Activated B cell treated with CpG ODN at 0.5 μM for 24 hours (primary cell): ENCODE measurements at regions of chr4 and their contacts with region 1.

Region 1: GRCh38 chr4:101596781-101597552 is 193.6 kb upstream of the BANK1 start:
- DNase-seq: no peak
- ATAC-seq: peak; percentile 62
- H3K4me3 Mint-ChIP-seq: peak overlapping the region; percentile 7
- H3K27ac Mint-ChIP-seq: peak overlapping the region; percentile 74
- H3K4me1 Mint-ChIP-seq: peaks cover 15% of the 10 kb centered on the region
- H3K27me3 Mint-ChIP-seq: no peaks in the 10 kb centered on the region
- CTCF ChIP-seq: no peak

Region 2: GRCh38 chr4:101037938-101038413 is 559.0 kb before region 1 on chr4:
- CTCF ChIA-PET with region 1: no interaction called
- POLR2A ChIA-PET with region 1: interaction called, 11 read pairs
- intact Hi-C with region 1: no loop called
- DNase-seq: no peak
- ATAC-seq: no peak
- H3K4me3 Mint-ChIP-seq: no peak overlapping the region
- H3K27ac Mint-ChIP-seq: no peak overlapping the region
- H3K4me1 Mint-ChIP-seq: no peaks in the 10 kb centered on the region
- H3K27me3 Mint-ChIP-seq: no peaks in the 10 kb centered on the region
- CTCF ChIP-seq: no peak

Region 3: GRCh38 chr4:101425829-101426228 is 171.1 kb before region 1 on chr4:
- CTCF ChIA-PET with region 1: no interaction called
- POLR2A ChIA-PET with region 1: no interaction called
- intact Hi-C with region 1: no loop called
- DNase-seq: no peak
- ATAC-seq: no peak
- H3K4me3 Mint-ChIP-seq: no peak overlapping the region
- H3K27ac Mint-ChIP-seq: no peak overlapping the region
- H3K4me1 Mint-ChIP-seq: no peaks in the 10 kb centered on the region
- H3K27me3 Mint-ChIP-seq: no peaks in the 10 kb centered on the region
- CTCF ChIP-seq: no peak

Region 4: DNA sequence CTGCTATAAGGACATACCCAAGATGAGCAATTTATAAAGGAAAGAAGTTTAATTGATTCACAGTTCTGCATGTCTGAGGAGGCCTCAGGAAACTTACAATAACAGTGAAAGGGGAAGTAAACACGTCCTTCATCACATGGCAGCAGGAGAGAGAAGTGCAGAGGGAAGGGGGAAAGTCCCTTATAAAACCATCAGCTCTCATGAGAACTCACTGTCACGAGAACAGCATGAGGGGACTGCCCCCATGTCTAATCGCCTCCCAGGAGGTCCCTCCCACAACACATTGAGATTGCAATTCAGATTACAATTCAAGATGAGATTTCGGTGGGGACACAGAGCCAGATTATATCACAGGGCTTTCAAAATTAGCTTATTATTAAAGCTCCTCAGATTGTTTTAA is 40.1 kb before region 1 on chr4:
- CTCF ChIA-PET with region 1: no interaction called
- POLR2A ChIA-PET with region 1: no interaction called
- intact Hi-C with region 1: loop called (anchors 5 kb)
- DNase-seq: no peak
- ATAC-seq: peak; percentile 98
- H3K4me3 Mint-ChIP-seq: peak overlapping the region; percentile 16
- H3K27ac Mint-ChIP-seq: peak overlapping the region; percentile 83
- H3K4me1 Mint-ChIP-seq: peaks cover 12% of the 10 kb centered on the region
- H3K27me3 Mint-ChIP-seq: no peaks in the 10 kb centered on the region
- CTCF ChIP-seq: no peak

Region 5: GRCh38 chr4:101790521-101791188 is 193.7 kb after region 1 on chr4 and contains the start of gene BANK1:
- CTCF ChIA-PET with region 1: no interaction called
- POLR2A ChIA-PET with region 1: no interaction called
- intact Hi-C with region 1: no loop called
- DNase-seq: peak; percentile 86
- ATAC-seq: peak; percentile 89
- H3K4me3 Mint-ChIP-seq: peak within 1 kb of the TSS; percentile 97
- H3K27ac Mint-ChIP-seq: peak within 1 kb of the TSS; percentile 99
- H3K4me1 Mint-ChIP-seq: peaks cover 66% of the 10 kb centered on the region
- H3K27me3 Mint-ChIP-seq: no peaks in the 10 kb centered on the region
- CTCF ChIP-seq: peak; percentile 37
- total RNA-seq, gene BANK1: 307 and 336 TPM in 2 replicates